HEK293 (cell line): ENCODE measurements at regions of chr22 and their contacts with region 1.

Region 1: GRCh38 chr22:22959147-22959827 is 71.7 kb downstream of the IGLL5 start:
- H3K4me3 ChIP-seq: no peak overlapping the region
- H3K27ac ChIP-seq: no peak overlapping the region
- H3K4me1 ChIP-seq: no peaks in the 10 kb centered on the region
- CTCF ChIP-seq: peak; percentile 98

Region 2: GRCh38 chr22:22520020-22520656 is 439.1 kb before region 1 on chr22 and contains the start of gene ZNF280A:
- CTCF ChIA-PET with region 1: no interaction called
- POLR2A ChIA-PET with region 1: no interaction called
- H3K4me3 ChIP-seq: no peak within 1 kb of the TSS
- H3K27ac ChIP-seq: no peak within 1 kb of the TSS
- H3K4me1 ChIP-seq: no peaks in the 10 kb centered on the region
- CTCF ChIP-seq: no peak

Region 3: GRCh38 chr22:22666307-22667091 is 292.8 kb before region 1 on chr22:
- CTCF ChIA-PET with region 1: interaction called, 14 read pairs
- POLR2A ChIA-PET with region 1: no interaction called
- H3K4me3 ChIP-seq: no peak overlapping the region
- H3K27ac ChIP-seq: no peak overlapping the region
- H3K4me1 ChIP-seq: no peaks in the 10 kb centered on the region
- CTCF ChIP-seq: peak; percentile 65

Region 4: DNA sequence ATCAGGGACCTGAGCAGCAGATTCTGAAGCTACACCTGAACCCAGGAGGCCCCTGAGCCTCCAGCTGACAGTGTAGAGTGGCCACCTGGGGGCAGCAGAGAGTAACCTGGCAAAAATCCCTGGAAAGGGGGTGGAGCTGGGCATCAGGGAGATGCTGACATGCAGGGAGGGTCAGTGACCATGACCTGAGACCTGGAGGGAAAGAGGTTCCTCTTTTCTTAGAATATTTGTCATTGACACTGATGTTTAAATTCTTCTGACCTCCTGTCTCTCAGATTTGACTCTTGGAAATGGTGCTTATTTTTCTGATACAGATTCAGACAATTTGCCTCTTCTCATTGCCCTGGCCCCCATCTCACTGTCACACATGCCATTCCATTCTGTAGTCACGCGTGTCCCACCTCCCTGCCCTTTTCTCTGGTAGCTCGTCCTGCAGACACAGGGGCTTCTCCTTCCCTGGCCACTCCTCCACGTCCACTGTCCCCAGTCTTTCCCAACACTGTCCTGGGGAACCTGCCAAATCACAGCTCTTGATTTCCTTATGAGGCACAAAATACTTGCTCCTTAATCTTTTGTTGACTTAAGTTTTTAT is 188.9 kb before region 1 on chr22:
- CTCF ChIA-PET with region 1: interaction called, 15 read pairs
- POLR2A ChIA-PET with region 1: no interaction called
- H3K4me3 ChIP-seq: no peak overlapping the region
- H3K27ac ChIP-seq: no peak overlapping the region
- H3K4me1 ChIP-seq: no peaks in the 10 kb centered on the region
- CTCF ChIP-seq: peak; percentile 56

Region 5: DNA sequence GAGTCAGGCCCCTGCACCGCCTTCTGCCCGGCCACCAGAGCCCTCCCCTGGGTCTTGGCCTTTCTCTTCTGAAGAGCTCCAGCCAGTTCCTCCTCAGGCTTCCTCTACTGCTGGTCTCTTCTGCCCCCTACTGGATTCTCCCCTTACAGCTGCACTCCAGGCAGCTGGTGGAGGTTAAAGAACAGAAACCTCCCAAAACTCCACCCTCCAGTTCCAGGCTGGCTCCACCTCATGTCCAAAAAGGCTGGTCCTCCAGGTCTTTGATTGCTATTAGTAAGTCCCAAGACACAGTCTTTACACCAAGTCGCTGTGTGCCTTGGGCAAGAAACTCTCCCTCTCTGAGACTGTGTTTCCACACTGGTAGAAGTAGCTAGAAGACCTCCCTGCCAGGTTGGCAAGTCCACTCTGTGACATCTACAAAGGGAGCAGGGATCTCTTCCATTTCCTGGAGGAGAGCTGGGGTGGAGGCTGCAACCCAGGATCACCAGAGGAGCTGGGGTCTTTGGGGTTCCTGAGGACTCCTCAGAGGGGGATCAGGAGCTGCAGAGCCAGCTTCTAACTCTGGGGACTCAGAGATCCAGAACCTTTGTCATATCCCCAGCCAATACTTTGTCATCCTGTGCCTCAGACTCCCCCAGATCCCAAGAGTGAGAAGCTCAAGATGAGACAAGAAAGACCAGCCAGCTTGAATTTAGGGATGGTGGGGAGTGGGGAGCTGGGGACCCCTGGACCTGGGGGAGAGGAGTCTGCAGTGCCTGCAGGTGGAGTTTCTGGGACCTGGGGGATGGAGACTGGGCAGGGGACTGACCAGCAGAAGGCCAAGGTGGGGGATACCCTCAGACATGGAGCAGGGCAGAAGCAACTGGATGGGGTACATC is 75.0 kb before region 1 on chr22:
- CTCF ChIA-PET with region 1: interaction called, 29 read pairs
- POLR2A ChIA-PET with region 1: no interaction called
- H3K4me3 ChIP-seq: no peak overlapping the region
- H3K27ac ChIP-seq: no peak overlapping the region
- H3K4me1 ChIP-seq: no peaks in the 10 kb centered on the region
- CTCF ChIP-seq: peak; percentile 48

Region 6: DNA sequence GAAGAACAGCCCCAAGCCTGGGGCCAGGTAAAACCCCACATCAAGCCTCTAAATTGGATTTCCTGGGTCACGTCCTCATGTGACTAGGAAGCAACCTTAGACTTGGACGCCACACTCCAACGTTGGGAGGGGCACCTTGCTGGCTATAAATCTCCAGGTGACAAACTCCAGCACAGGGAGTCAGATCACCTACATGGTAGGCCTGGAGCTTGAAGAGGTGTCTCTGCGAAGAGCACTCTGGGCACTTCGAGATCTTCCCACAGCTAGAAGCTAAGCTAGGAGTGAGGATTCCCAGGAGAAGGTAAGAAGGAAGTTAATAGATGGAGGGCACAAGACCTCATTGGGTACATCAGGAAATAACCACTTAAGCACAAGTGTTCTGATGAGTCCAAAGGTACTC is 33.9 kb after region 1 on chr22:
- CTCF ChIA-PET with region 1: interaction called, 11 read pairs
- POLR2A ChIA-PET with region 1: no interaction called
- H3K4me3 ChIP-seq: no peak overlapping the region
- H3K27ac ChIP-seq: no peak overlapping the region
- H3K4me1 ChIP-seq: no peaks in the 10 kb centered on the region
- CTCF ChIP-seq: no peak

Region 7: GRCh38 chr22:23128269-23129108 is 169.2 kb after region 1 on chr22:
- CTCF ChIA-PET with region 1: interaction called, 304 read pairs
- POLR2A ChIA-PET with region 1: interaction called, 3 read pairs
- H3K4me3 ChIP-seq: no peak overlapping the region
- H3K27ac ChIP-seq: no peak overlapping the region
- H3K4me1 ChIP-seq: no peaks in the 10 kb centered on the region
- CTCF ChIP-seq: peak; percentile 82

Region 8: GRCh38 chr22:23281406-23282088 is 322.3 kb after region 1 on chr22:
- CTCF ChIA-PET with region 1: interaction called, 19 read pairs
- POLR2A ChIA-PET with region 1: no interaction called
- H3K4me3 ChIP-seq: no peak overlapping the region
- H3K27ac ChIP-seq: no peak overlapping the region
- H3K4me1 ChIP-seq: no peaks in the 10 kb centered on the region
- CTCF ChIP-seq: peak; percentile 96

Region 9: GRCh38 chr22:23485490-23485889 is 526.2 kb after region 1 on chr22:
- CTCF ChIA-PET with region 1: no interaction called
- POLR2A ChIA-PET with region 1: no interaction called
- H3K4me3 ChIP-seq: no peak overlapping the region
- H3K27ac ChIP-seq: no peak overlapping the region
- H3K4me1 ChIP-seq: no peaks in the 10 kb centered on the region
- CTCF ChIP-seq: no peak